A673 (cell line): ENCODE measurements at regions of chr12 and their contacts with region 1.

Region 1: DNA sequence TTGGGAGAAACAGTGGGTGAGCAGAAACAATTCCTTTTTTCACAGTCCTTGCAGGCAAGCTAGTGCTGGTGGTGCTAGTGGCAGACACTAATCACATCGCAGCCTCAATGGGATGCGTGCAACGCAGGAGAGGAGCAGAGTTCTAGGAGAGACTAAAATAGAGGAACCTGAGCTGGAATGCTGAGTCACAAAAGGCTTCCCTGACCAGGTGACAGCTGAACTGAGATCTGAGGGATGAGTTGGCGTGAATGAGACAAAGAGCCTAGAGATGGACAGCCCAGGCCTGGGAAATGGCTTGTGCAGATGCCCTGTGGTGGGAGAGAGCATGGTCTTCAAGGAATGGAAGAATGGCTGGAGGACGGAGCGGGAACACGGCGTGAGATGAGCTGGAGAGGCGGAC is 25.8 kb downstream of the ACADS start:
- DNase-seq: no peak
- H3K4me3 ChIP-seq: no peak overlapping the region
- H3K27ac ChIP-seq: no peak overlapping the region
- H3K4me1 ChIP-seq: no peaks in the 10 kb centered on the region
- H3K27me3 ChIP-seq: no peaks in the 10 kb centered on the region
- CTCF ChIP-seq: no peak

Region 2: GRCh38 chr12:120481022-120481767 is 270.2 kb before region 1 on chr12:
- CTCF ChIA-PET with region 1: no interaction called
- POLR2A ChIA-PET with region 1: no interaction called
- intact Hi-C with region 1: no loop called
- DNase-seq: no peak
- H3K4me3 ChIP-seq: no peak overlapping the region
- H3K27ac ChIP-seq: no peak overlapping the region
- H3K4me1 ChIP-seq: no peaks in the 10 kb centered on the region
- H3K27me3 ChIP-seq: no peaks in the 10 kb centered on the region
- CTCF ChIP-seq: no peak

Region 3: DNA sequence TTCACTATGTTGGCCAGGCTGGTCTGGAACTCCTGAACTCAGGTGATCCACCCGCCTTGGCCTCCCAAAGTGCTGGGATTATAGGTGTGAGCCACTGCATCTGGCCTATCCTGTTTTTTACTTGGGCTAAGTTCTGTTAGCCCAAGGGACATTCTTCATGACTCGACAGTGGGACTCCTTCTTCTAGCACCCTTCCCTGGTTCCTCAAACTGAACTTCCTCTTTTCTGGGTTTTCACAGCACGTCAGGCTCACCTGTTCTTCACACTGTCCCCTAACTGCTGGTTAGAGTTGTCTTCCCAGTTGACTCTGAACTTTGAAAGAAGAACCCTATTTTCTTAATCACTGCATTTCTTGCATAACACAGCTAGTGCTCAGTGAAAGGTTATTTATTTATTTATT is 88.5 kb before region 1 on chr12:
- CTCF ChIA-PET with region 1: interaction called, 10 read pairs
- POLR2A ChIA-PET with region 1: no interaction called
- intact Hi-C with region 1: no loop called
- DNase-seq: no peak
- H3K4me3 ChIP-seq: no peak overlapping the region
- H3K27ac ChIP-seq: no peak overlapping the region
- H3K4me1 ChIP-seq: no peaks in the 10 kb centered on the region
- H3K27me3 ChIP-seq: no peaks in the 10 kb centered on the region
- CTCF ChIP-seq: no peak

Region 4: DNA sequence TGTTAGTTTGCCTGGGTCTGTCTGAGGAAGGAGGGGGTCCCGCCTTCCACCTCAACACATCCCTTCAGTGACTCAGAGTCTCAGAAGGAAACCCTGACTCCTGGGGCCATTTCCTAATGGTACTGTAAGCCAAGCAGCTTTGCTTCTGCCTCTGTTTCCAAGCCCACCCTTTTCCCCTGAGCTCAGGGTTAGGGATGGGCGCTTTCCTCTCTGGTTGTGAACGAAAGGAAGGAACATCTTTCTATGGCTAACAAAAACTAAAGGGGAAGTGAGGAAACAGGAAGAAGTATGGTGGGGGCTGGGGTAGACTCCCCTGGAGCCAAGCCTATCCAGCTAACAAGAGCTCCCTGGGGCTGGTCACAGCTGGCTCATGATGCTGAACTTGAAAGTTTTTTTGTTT is 52.7 kb before region 1 on chr12:
- CTCF ChIA-PET with region 1: no interaction called
- POLR2A ChIA-PET with region 1: no interaction called
- intact Hi-C with region 1: no loop called
- DNase-seq: no peak
- H3K4me3 ChIP-seq: no peak overlapping the region
- H3K27ac ChIP-seq: no peak overlapping the region
- H3K4me1 ChIP-seq: no peaks in the 10 kb centered on the region
- H3K27me3 ChIP-seq: no peaks in the 10 kb centered on the region
- CTCF ChIP-seq: no peak

Region 5: DNA sequence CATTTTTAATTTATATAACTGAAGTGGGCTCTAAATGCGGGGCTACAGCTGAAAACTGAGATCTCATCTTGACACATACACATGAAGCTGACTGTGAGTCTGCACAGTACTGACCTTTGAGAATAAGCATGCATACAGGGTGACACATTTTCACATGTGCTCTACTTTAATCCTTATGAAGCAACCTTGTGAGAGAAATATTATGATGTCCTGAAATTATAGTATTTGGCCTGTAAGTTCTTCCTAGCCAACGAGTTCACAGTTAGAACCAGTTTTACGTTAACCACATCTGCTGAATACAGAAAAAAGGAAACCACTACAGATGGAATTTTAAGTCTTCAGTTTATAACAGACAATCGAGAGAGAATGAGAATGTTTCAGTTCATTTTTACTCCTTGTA is 82.5 kb after region 1 on chr12:
- CTCF ChIA-PET with region 1: no interaction called
- POLR2A ChIA-PET with region 1: no interaction called
- intact Hi-C with region 1: no loop called
- DNase-seq: no peak
- H3K4me3 ChIP-seq: no peak overlapping the region
- H3K27ac ChIP-seq: no peak overlapping the region
- H3K4me1 ChIP-seq: peaks cover 27% of the 10 kb centered on the region
- H3K27me3 ChIP-seq: no peaks in the 10 kb centered on the region
- CTCF ChIP-seq: no peak